Dendritic cell treated with granulocyte-macrophage colony-stimulating factor and Interleukin-4, amounts not matched to agents 40 ng/mL and 50 ng/mL, for 4 days (primary cell): ENCODE measurements at regions of chr12 and their contacts with region 1.

Region 1: GRCh38 chr12:11805043-11805442 is 155.6 kb downstream of the ETV6 start:
- H3K4me3 Mint-ChIP-seq: no peak overlapping the region
- H3K27ac Mint-ChIP-seq: peak overlapping the region; percentile 88
- H3K4me1 Mint-ChIP-seq: peaks cover 87% of the 10 kb centered on the region
- H3K27me3 Mint-ChIP-seq: no peaks in the 10 kb centered on the region

Region 2: DNA sequence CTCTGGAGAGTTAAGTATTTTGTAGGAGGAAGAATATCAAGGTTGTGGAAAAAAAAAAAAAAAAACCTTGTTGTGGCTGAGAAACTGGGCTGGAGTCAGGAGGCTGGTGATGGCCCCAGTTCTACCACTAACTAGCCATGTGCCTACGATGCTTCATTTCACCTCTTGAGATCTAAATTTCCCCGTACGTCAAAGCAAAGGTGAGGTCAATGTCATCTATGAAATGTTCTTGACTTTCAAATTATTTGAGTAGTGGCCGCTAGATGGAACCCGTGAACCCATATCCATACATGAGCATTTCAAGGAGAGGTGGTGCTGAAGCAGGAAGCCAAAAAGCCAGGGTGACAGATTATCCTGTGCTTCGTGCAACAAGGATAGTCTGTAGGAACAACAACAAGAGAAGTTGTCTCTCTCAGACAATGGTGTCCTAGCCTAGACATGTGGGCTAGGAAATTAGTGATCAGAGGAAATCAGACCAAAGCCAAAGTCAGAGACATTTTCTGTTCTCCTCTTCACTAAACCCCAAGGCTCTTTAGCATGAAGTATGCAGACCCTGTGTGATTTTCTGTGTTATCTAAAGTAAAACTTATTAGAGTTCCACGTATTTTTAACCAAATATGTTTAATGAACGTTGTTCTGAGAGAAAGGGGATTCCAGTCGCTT is 251.0 kb before region 1 on chr12:
- intact Hi-C with region 1: no loop called
- H3K4me3 Mint-ChIP-seq: no peak overlapping the region
- H3K27ac Mint-ChIP-seq: no peak overlapping the region
- H3K4me1 Mint-ChIP-seq: peaks cover 43% of the 10 kb centered on the region
- H3K27me3 Mint-ChIP-seq: no peaks in the 10 kb centered on the region

Region 3: GRCh38 chr12:11771356-11771755 is 33.7 kb before region 1 on chr12:
- intact Hi-C with region 1: loop called (anchors 5 kb)
- H3K4me3 Mint-ChIP-seq: no peak overlapping the region
- H3K27ac Mint-ChIP-seq: peak overlapping the region; percentile 85
- H3K4me1 Mint-ChIP-seq: peaks cover 89% of the 10 kb centered on the region
- H3K27me3 Mint-ChIP-seq: no peaks in the 10 kb centered on the region

Region 4: GRCh38 chr12:11906286-11906935 is 101.4 kb after region 1 on chr12:
- intact Hi-C with region 1: no loop called
- H3K4me3 Mint-ChIP-seq: no peak overlapping the region
- H3K27ac Mint-ChIP-seq: no peak overlapping the region
- H3K4me1 Mint-ChIP-seq: peaks cover 5% of the 10 kb centered on the region
- H3K27me3 Mint-ChIP-seq: peaks cover 3% of the 10 kb centered on the region